ENCODE measurements at regions of chr17 and their contacts with region 1.

Region 1: GRCh38 chr17:7383742-7384488 is 3.0 kb downstream of the TNK1 start:
- DNase-seq: peak; percentile 60 to 91 (median 80)
- ATAC-seq: peak; percentile 94
- H3K4me3 ChIP-seq: peak overlapping the region; percentile 66 to 75
- H3K4me3 Mint-ChIP-seq: peak overlapping the region; percentile 88
- H3K27ac ChIP-seq: peak overlapping the region; percentile 80 to 92
- H3K27ac Mint-ChIP-seq: peak overlapping the region; percentile 96
- H3K4me1 ChIP-seq: peaks cover 21% of the 10 kb centered on the region
- H3K4me1 Mint-ChIP-seq: peaks cover 8% of the 10 kb centered on the region
- H3K27me3 ChIP-seq: peaks cover 12 to 14% of the 10 kb centered on the region in 2 experiments
- H3K27me3 Mint-ChIP-seq: peaks cover 29% of the 10 kb centered on the region
- CTCF ChIP-seq: no peak

Region 2: DNA sequence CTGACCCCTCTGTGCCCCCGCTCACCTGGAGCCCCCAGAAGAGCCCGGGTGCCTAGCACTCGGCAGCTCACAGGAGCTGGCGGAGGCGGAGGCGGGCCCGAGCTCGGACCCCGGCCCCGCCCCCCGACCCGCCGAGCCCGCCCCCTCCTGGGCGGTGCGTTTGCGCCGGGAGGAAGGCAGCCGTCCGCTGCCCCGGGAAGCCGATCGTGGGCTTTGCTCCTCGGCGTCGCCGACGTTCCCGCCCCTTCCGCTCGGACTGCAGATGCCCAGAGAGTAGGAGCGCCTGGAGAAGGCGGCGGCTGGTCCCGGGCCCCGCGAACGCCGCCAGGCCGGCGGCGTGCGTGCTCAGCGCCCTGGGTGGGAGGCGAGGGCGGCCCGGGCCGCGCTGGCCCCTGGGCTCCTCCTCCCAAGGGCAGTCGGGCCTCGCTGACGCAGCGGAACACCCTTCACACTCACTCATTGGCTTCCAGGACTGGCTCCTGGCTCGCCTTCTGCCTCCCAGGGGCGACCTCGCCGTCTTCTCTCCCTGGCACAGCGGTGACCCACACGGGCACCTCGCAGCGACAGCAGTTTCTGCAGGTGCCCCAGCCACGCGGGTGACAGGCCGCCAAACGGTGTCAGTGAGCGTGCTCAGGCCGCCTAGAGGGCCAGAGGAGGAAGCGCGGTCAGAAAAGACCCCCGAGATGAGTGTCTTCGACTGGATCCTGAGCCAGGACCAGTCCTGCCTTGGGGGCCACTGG is 10.7 kb after region 1 on chr17 and contains the start of gene PLSCR3:
- CTCF ChIA-PET with region 1: interaction called, 4 read pairs
- POLR2A ChIA-PET with region 1: interaction called, 29 read pairs
- intact Hi-C with region 1: loop called (anchors 1 kb)
- DNase-seq: peak; percentile 65 to 92 (median 80)
- ATAC-seq: peak; percentile 88
- H3K4me3 ChIP-seq: peak within 1 kb of the TSS; percentile 81 to 84
- H3K4me3 Mint-ChIP-seq: peak within 1 kb of the TSS; percentile 92
- H3K27ac ChIP-seq: peak within 1 kb of the TSS; percentile 68 to 72
- H3K27ac Mint-ChIP-seq: peak within 1 kb of the TSS; percentile 92
- H3K4me1 ChIP-seq: peaks cover 33% of the 10 kb centered on the region
- H3K4me1 Mint-ChIP-seq: peaks cover 26% of the 10 kb centered on the region
- H3K27me3 ChIP-seq: no peaks in the 10 kb centered on the region
- H3K27me3 Mint-ChIP-seq: no peaks in the 10 kb centered on the region
- CTCF ChIP-seq: no peak
- total RNA-seq, gene PLSCR3: 38.1 TPM